IMR-90 (cell line): ENCODE measurements at regions of chr14 and their contacts with region 1.

Region 1: DNA sequence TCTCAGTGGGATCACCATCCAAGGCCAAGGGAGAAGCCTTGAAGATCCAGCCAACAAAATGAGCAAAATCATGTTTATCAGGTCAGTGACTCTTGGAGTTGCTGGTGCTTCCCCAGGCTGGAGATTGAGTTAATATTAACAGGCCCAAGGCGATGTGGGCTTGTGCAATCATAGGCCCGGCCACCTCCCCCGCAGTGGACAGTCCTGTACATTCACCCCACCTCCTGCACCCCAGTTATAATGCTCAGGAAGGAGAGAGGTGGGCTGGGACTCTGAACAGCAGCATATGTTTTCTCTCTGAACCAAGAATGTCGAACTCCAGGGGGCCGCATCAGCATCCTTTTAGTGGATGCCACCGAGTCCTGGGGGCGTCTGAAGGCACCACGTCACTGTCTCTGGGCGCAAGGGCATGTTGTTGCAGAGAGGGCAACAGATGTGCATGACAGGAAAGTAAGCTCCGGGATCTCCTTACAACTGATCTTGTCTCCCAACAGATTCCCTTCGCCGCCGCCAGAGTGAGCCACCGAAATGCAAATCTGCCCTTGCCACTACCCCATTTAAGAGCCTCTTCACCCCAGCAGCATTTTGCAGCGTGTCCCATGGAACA is 32.2 kb upstream of the SERPINA6 start:
- DNase-seq: peak; percentile 65
- ATAC-seq: peak; percentile 93
- H3K4me3 ChIP-seq: no peak overlapping the region
- H3K27ac ChIP-seq: no peak overlapping the region
- H3K4me1 ChIP-seq: 0 out of 2 replicates have a peak, but pooled peaks cover 2% of the 10 kb centered on the region
- H3K27me3 ChIP-seq: no peaks in the 10 kb centered on the region
- CTCF ChIP-seq: peak; percentile 52
- POLR2A ChIP-seq: no peak
- RAD21 ChIP-seq: peak; percentile 67

Region 2: GRCh38 chr14:94412671-94413638 is 57.7 kb after region 1 on chr14:
- CTCF ChIA-PET with region 1: no interaction called
- POLR2A ChIA-PET with region 1: no interaction called
- dilution Hi-C with region 1: no loop called
- in situ Hi-C with region 1: no loop called
- intact Hi-C with region 1: loop called (anchors 1 kb)
- DNase-seq: no peak
- ATAC-seq: no peak
- H3K4me3 ChIP-seq: no peak overlapping the region
- H3K27ac ChIP-seq: no peak overlapping the region
- H3K4me1 ChIP-seq: no peaks in the 10 kb centered on the region
- H3K27me3 ChIP-seq: peaks cover 4% of the 10 kb centered on the region; the same call in 1 of the 2 replicates
- CTCF ChIP-seq: peak; percentile 42
- POLR2A ChIP-seq: no peak
- RAD21 ChIP-seq: peak; percentile 53